ENCODE measurements at regions of chr9 and their contacts with region 1.

Region 1: GRCh38 chr9:71431931-71432330 is 310.5 kb upstream of the TRPM3 start:
- DNase-seq: no peak
- H3K4me3 Mint-ChIP-seq: no peak overlapping the region
- H3K27ac Mint-ChIP-seq: no peak overlapping the region
- H3K4me1 Mint-ChIP-seq: no peaks in the 10 kb centered on the region
- H3K27me3 Mint-ChIP-seq: peaks cover 26% of the 10 kb centered on the region
- CTCF ChIP-seq: no peak

Region 2: GRCh38 chr9:71975833-71976232 is 543.9 kb after region 1 on chr9:
- CTCF ChIA-PET with region 1: no interaction called
- intact Hi-C with region 1: loop called (anchors 5 kb)
- DNase-seq: no peak
- H3K4me3 Mint-ChIP-seq: no peak overlapping the region
- H3K27ac Mint-ChIP-seq: no peak overlapping the region
- H3K4me1 Mint-ChIP-seq: no peaks in the 10 kb centered on the region
- H3K27me3 Mint-ChIP-seq: no peaks in the 10 kb centered on the region
- CTCF ChIP-seq: no peak

Measured in Calu3 (cell line).